ENCODE measurements at regions of chr20 and their contacts with region 1.

Region 1: GRCh38 chr20:54668271-54669039 is 193.1 kb downstream of the DOK5 start:
- DNase-seq: peak; percentile 30 to 64
- H3K4me3 ChIP-seq: no peak overlapping the region
- H3K4me1 ChIP-seq: peaks cover 6% of the 10 kb centered on the region
- H3K27me3 ChIP-seq: no peaks in the 10 kb centered on the region

Region 2: GRCh38 chr20:56247948-56248782 is 1579.7 kb after region 1 on chr20 and contains the start of gene MC3R:
- in situ Hi-C with region 1: loop called (anchors 25 kb)
- DNase-seq: peak; percentile 30 to 65
- H3K4me3 ChIP-seq: no peak within 1 kb of the TSS
- H3K4me1 ChIP-seq: no peaks in the 10 kb centered on the region
- H3K27me3 ChIP-seq: 0 out of 2 replicates have a peak, but pooled peaks cover 3% of the 10 kb centered on the region

Region 3: DNA sequence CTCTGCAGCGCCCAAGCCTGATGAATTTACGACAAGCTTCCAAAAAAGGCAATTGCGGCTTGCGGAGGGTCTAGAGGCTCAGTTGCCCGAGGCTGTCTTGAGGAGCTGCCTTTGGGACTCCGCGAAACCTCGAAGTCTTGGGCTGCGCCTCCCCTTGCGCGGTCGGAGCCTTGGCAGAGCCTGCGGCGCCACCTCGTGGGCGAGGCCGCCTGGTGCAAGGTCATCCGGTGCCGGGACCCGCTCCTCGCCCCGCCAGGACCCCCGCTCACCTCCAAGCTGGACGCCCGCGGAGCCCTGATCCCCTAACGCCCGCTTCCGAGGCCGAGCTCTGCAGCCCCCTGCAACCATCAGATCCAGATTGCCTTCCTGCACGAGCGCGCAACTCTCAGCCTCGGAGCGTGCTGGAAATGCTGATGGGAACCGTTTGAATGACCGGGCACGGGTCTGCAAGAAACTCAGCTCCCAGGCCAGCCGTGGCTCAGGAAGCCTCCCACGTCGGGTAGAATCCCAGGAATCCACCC is 1675.5 kb after region 1 on chr20:
- in situ Hi-C with region 1: loop called (anchors 25 kb)
- DNase-seq: peak in 1 of 2 experiments; percentile 71
- H3K4me3 ChIP-seq: no peak overlapping the region
- H3K4me1 ChIP-seq: peaks cover 14% of the 10 kb centered on the region
- H3K27me3 ChIP-seq: peaks cover 41% of the 10 kb centered on the region

Measured in HAP-1 (cell line).